ENCODE measurements at regions of chr16 and their contacts with region 1.

Region 1: GRCh38 chr16:30526823-30527635 is 663 bp upstream of the ZNF768 start:
- DNase-seq: peak; percentile 75 to 91 (median 82)
- H3K4me3 ChIP-seq: peak overlapping the region; percentile 21
- H3K4me3 Mint-ChIP-seq: peak overlapping the region; percentile 80 to 94 (median 84)
- H3K27ac ChIP-seq: peak overlapping the region; percentile 79
- H3K27ac Mint-ChIP-seq: peak overlapping the region; percentile 78 to 99 (median 92)
- H3K4me1 ChIP-seq: peaks cover 19% of the 10 kb centered on the region
- H3K4me1 Mint-ChIP-seq: peaks cover 14 to 27% (median 25%) of the 10 kb centered on the region in 3 donors
- H3K27me3 ChIP-seq: no peaks in the 10 kb centered on the region
- H3K27me3 Mint-ChIP-seq: no peaks in the 10 kb centered on the region

Region 2: DNA sequence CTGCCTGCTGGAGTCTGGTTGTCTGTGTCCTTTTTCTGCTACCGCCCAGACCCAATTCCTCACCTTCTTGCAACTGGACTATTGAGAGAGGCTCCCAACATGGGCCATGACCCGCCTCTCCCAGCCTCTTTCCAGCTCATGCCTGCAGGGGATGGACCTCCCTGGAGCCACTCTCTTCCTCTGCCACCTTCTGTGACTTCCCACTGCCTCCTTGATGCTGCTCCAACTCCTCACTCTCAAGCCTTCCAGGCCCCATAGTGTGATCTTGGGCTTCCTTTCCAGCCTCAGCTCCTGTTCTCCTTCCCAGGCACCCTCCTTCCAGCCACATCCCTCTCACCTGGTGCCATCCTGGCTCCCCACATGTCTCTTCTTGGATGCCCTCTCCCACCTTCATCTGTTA is 11.8 kb before region 1 on chr16:
- CTCF ChIA-PET with region 1: interaction called, 3 read pairs
- POLR2A ChIA-PET with region 1: interaction called, 11 read pairs
- DNase-seq: no peak
- H3K4me3 ChIP-seq: no peak overlapping the region
- H3K4me3 Mint-ChIP-seq: no peak overlapping the region
- H3K27ac ChIP-seq: no peak overlapping the region
- H3K27ac Mint-ChIP-seq: peak overlapping the region in 7 of 8 donors; percentile 39 to 91 (median 79)
- H3K4me1 ChIP-seq: no peaks in the 10 kb centered on the region
- H3K4me1 Mint-ChIP-seq: peaks cover 14 to 37% (median 24%) of the 10 kb centered on the region in 3 donors
- H3K27me3 ChIP-seq: no peaks in the 10 kb centered on the region
- H3K27me3 Mint-ChIP-seq: peaks cover 0 to 1% of the 10 kb centered on the region in 2 donors

Region 3: GRCh38 chr16:30551781-30552180 is 24.8 kb after region 1 on chr16:
- CTCF ChIA-PET with region 1: interaction called, 69 read pairs
- POLR2A ChIA-PET with region 1: interaction called, 13 read pairs
- DNase-seq: peak; percentile 59 to 86 (median 71)
- H3K4me3 ChIP-seq: peak overlapping the region; percentile 37
- H3K4me3 Mint-ChIP-seq: peak overlapping the region; percentile 64 to 89 (median 80)
- H3K27ac ChIP-seq: peak overlapping the region; percentile 24
- H3K27ac Mint-ChIP-seq: peak overlapping the region; percentile 82 to 97 (median 94)
- H3K4me1 ChIP-seq: peaks cover 42% of the 10 kb centered on the region
- H3K4me1 Mint-ChIP-seq: peaks cover 50 to 75% (median 58%) of the 10 kb centered on the region in 3 donors
- H3K27me3 ChIP-seq: no peaks in the 10 kb centered on the region
- H3K27me3 Mint-ChIP-seq: peaks cover 0 to 3% of the 10 kb centered on the region in 2 donors

Region 4: DNA sequence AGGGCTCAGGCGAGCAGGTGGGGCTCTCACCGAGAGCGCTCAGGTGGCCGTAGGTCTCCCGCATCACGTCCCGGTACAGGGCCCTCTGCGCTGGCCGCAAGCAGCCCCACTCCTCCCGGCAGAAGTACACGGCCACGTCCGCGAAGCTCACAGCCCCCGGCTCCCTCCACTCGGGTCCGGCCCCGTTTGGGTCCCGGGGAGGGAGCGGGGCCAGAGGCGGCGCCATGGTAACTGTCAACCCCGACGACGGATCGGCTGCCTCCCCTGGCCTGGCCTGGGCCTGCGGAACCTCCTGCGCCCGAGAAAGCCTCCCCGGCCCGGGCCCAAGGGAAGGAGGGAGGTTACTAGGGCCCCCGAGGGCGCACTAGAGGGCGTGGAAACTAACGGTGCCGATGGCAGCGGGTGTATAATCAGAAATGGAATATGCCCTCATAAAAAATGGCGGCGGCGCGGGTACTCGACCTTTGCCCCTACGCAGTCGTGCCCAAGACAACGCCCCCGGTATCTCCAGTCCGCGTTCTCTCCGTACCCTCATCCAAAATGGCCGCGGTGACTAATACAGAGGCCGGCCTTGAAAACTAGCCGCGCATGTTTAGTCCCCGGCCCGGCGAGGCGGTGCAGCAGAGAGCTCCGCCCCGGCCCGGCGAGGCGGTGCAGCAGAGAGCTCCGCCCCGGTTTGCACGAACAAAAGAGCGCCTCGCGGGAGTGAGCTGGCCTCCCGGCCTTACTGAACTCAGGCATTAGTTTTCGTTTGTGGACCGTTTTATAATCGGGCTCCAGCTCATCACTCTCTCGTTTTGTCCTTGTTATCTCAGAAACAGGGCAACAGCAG is 31.1 kb after region 1 on chr16 and contains the start of gene ZNF764:
- CTCF ChIA-PET with region 1: interaction called, 69 read pairs
- POLR2A ChIA-PET with region 1: interaction called, 8 read pairs
- DNase-seq: peak; percentile 92 to 98 (median 95)
- H3K4me3 ChIP-seq: peak within 1 kb of the TSS; percentile 90
- H3K4me3 Mint-ChIP-seq: peak within 1 kb of the TSS; percentile 85 to 95 (median 89)
- H3K27ac ChIP-seq: peak within 1 kb of the TSS; percentile 93
- H3K27ac Mint-ChIP-seq: peak within 1 kb of the TSS; percentile 87 to 97 (median 92)
- H3K4me1 ChIP-seq: peaks cover 27% of the 10 kb centered on the region
- H3K4me1 Mint-ChIP-seq: peaks cover 38 to 63% (median 40%) of the 10 kb centered on the region in 3 donors
- H3K27me3 ChIP-seq: no peaks in the 10 kb centered on the region
- H3K27me3 Mint-ChIP-seq: peaks cover 0 to 2% of the 10 kb centered on the region in 2 donors
- total RNA-seq, gene ZNF764: 15.1 to 15.7 TPM

Measured in CD8-positive, alpha-beta memory T cell (primary cell).